ENCODE measurements at regions of chr3 and their contacts with region 1.

Region 1: DNA sequence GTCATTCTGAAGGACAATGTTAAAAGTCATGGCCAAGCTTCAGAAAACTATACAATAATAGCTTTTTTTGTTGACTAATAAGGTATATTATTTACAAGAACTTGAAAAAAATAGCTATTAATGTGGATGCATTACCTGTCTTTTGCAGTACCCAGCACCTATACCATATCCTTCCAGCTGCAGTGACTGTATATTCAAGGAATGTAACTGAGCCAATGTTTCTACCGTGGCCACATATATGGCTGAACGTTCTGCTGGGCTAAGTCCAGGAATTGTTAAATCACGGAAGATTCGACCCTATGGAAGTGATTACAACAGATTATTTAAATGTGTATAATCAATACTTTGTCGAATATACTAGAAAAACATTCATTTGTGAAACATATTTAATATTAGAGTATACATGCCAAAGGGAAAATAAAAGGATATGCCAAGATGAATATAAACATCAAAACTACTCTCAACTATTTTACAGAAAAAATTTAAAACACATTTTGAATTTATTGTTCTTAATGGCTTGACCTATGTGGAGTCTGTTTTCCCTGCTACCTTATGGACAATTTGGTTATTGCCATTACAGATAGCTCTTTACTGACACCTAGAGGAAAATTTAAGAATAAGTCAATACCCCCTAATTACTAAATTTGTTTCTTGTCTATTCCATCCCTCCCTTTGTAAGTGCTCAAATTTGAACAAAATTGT is 17.6 kb downstream of the ACAD11 start:
- DNase-seq: no peak
- H3K4me3 ChIP-seq: no peak overlapping the region
- CTCF ChIP-seq: peak; percentile 41

Region 2: DNA sequence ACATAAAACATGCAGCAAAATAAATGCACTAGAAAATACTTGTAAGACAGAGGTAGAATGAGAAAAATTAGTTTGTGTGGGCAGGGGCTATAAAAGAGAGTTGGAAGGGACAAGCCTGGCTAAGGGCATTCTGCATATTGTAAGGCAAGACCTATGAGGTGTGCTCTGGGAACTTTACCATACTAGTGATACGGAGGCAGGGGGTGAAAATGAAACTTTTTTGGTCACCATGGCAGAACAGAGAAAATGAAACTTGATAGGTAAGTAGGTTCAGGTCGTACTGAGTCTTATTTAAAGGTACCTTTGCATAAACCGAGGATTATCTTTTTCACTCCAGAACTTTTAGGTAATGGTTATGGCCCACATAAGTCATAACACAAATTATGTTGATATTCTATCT is 119.6 kb before region 1 on chr3:
- CTCF ChIA-PET with region 1: interaction called, 33 read pairs
- POLR2A ChIA-PET with region 1: no interaction called
- DNase-seq: no peak
- H3K4me3 ChIP-seq: no peak overlapping the region
- CTCF ChIP-seq: no peak

Region 3: DNA sequence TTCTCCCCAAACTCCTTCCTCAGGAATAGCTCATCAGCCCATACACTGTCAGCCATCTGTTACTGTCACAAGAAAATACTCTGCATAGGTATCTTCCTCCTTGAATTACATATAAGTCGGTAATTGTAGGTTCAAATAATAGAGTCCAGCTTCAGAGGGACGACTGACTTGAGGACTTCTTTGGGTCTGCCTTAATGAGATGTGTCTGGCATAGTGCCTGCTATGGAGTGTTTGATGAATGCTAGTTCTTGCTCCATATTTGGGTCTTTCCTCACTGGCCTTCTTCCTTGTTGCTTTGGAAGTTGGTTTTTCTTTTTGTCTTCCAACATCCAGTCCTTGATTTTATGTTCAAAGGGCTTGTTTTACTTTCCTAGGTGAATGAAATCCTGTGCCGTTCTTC is 111.4 kb before region 1 on chr3:
- CTCF ChIA-PET with region 1: interaction called, 524 read pairs
- POLR2A ChIA-PET with region 1: no interaction called
- DNase-seq: no peak
- H3K4me3 ChIP-seq: no peak overlapping the region
- CTCF ChIP-seq: no peak

Region 4: DNA sequence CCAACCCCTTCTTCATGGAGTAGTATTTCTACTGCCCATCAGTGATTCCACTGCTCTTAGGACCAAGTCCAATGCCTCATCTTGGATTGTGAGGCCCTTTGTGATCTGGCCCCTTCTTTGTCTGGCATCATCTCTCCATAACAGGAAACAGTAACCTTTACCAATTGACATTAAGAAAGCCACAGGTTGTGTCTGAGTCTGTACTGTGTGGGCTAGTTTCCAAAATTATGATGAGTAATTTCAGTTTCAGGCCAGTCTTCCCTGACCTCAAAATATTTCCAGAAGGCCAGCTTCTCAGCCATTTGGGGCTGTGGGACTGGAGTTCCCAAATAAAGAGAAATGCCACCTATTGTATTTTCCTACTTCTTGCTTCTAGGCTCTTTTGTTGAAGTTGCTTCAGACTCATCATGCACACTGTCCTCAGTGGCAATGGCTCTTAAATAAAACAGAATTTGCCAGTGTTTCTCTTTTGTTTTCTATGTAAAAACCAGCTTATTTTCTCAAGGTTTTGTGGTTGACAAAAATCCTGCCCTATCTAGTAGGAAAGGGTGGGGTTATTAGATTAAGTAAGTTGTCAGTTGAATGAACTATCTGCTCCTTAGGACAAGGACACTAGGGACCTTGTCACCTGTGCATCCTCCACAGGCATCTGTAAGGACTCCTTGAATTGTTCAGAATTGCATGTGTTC is 92.0 kb before region 1 on chr3:
- CTCF ChIA-PET with region 1: interaction called, 24 read pairs
- POLR2A ChIA-PET with region 1: no interaction called
- DNase-seq: no peak
- H3K4me3 ChIP-seq: no peak overlapping the region
- CTCF ChIP-seq: no peak

Region 5: DNA sequence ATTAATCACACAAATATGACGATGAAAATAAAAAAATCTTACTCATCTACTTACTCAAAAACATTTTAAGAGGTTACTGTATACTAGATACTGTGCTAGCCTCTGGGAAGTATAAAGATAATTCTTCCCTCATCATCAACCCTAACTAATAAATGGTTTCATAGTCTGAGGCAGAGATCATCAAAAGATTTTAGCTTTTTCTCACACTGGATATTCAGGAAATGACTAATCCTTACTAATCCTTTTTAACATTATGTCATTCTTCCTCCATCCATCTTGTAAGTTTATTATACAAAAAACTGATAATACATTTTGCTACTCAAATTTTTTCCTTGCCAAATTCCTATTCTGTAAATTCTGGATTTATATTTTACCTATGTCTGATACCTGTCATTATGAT is 12.1 kb before region 1 on chr3:
- CTCF ChIA-PET with region 1: interaction called, 14 read pairs
- POLR2A ChIA-PET with region 1: no interaction called
- DNase-seq: no peak
- H3K4me3 ChIP-seq: no peak overlapping the region
- CTCF ChIP-seq: no peak

Region 6: GRCh38 chr3:132652640-132653270 is 10.8 kb after region 1 on chr3:
- CTCF ChIA-PET with region 1: interaction called, 39 read pairs
- POLR2A ChIA-PET with region 1: no interaction called
- DNase-seq: no peak
- H3K4me3 ChIP-seq: no peak overlapping the region
- CTCF ChIP-seq: no peak

Region 7: DNA sequence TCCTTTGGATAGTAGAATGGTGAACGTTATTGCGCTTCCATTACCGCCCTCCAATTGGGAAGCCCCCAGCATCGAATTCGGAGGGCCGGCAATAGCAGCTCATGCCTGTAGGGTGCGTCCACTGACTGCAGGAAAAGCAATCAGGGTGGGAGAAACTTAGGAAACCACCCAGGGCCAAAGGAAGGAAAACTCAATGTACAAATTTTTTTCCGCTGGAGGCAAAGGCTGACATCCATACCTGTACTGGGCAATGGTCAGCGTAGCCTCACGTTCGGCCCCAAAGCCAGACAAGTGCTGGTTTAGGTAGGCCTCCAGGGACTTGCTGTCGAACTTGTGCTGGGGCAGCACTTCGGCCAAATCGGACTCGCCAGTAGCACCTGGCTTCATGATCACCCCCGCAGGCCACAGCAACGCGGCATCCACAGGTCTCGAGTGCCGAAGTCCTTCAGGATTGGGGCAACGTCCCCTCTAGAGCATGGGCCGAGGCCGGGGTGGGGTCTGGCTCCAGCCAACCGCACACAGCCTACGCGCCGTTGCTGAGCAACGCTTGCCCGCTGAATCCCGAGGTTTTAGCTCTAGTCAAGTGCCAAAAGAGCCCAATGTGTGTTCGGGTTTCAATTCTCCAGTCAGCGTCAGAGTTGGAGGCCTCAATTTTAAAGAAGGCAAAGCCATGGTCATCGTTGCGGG is 17.5 kb after region 1 on chr3 and contains the start of gene ACAD11:
- CTCF ChIA-PET with region 1: interaction called, 39 read pairs
- POLR2A ChIA-PET with region 1: interaction called, 4 read pairs
- DNase-seq: no peak
- H3K4me3 ChIP-seq: peak within 1 kb of the TSS; percentile 80
- CTCF ChIP-seq: peak; percentile 73

Region 8: DNA sequence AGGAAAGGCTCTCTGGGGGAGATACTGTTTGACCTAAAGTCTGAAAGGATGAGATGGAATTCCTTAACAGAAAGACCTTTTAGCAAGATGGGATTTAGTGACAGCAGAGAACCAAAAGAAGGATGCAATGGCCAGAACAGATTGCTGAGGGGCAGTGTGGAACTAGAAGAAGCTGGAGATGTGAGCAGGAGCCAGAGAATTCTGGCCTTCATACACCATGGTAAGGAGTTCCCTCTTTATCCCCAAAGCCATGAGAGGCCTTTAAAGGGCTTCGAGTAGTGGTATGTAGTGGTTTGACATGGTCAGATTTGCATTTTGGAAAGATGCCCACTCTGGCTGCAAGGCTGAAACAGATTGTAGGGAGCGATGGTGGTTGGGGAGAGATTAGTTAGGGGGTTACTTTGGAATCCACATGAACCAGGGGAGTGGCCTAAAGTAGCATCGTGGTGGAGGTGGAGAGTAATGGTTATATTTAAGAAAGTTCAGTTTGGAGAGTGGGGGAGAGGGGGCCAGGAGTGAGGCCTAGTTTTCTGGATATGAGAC is 114.2 kb after region 1 on chr3:
- CTCF ChIA-PET with region 1: no interaction called
- POLR2A ChIA-PET with region 1: no interaction called
- DNase-seq: no peak
- H3K4me3 ChIP-seq: no peak overlapping the region
- CTCF ChIP-seq: no peak